Activated B cell treated with CpG ODN at 0.5 μM for 24 hours (primary cell): ENCODE measurements at regions of chr10 and their contacts with region 1.

Region 1: GRCh38 chr10:28676968-28677887 is at the start of gene BAMBI:
- DNase-seq: peak; percentile 85
- ATAC-seq: peak; percentile 97
- H3K4me3 Mint-ChIP-seq: peak within 1 kb of the TSS; percentile 81
- H3K27ac Mint-ChIP-seq: no peak within 1 kb of the TSS
- H3K4me1 Mint-ChIP-seq: peaks cover 30% of the 10 kb centered on the region
- H3K27me3 Mint-ChIP-seq: peaks cover 51% of the 10 kb centered on the region
- CTCF ChIP-seq: no peak
- total RNA-seq, gene BAMBI: 0.16 and 0.32 TPM in 2 replicates

Region 2: DNA sequence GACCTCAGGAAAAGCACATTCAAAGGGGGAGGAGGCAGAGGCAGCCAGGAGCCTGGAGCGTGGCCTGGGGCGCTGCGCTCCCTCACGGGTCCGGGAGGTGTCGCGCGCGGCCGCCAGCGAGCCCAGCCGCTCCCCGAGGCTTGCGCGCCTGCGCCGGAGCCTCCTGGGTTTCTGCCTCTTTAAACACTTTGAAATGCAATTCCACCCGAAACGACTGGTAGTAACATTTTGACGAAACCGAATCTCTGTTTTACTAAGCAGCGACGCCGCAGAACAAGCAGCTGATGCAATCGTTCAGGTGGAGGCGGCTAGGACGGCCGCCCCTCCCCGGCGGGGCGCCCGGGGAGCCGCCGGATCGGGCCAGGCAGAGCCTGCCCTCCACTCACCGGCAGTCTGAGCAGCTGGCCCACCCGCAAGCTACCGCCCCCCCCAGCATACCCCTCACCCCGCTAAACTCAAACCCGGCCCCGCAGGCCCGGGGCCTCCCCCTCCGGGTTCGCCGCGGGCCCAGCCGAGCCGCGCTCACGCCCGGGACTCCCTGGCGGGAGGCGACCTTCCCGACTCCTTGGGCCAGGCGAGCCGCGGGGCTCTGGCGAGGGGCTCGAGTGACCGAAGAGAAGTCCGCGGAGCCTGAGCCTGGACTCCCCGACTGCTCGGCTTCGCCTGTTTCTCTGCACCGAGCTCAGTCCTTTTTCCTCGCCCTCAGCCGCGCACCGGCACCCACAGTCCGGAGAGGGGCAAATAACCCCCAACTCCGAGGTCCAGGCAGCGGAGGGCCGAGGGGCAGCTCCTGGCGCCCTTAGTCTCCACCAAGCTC is 934.8 kb before region 1 on chr10:
- CTCF ChIA-PET with region 1: no interaction called
- POLR2A ChIA-PET with region 1: no interaction called
- intact Hi-C with region 1: loop called (anchors 5 kb)
- DNase-seq: peak; percentile 66
- ATAC-seq: peak; percentile 91
- H3K4me3 Mint-ChIP-seq: peak overlapping the region; percentile 76
- H3K27ac Mint-ChIP-seq: no peak overlapping the region
- H3K4me1 Mint-ChIP-seq: peaks cover 24% of the 10 kb centered on the region
- H3K27me3 Mint-ChIP-seq: peaks cover 60% of the 10 kb centered on the region
- CTCF ChIP-seq: no peak

Region 3: DNA sequence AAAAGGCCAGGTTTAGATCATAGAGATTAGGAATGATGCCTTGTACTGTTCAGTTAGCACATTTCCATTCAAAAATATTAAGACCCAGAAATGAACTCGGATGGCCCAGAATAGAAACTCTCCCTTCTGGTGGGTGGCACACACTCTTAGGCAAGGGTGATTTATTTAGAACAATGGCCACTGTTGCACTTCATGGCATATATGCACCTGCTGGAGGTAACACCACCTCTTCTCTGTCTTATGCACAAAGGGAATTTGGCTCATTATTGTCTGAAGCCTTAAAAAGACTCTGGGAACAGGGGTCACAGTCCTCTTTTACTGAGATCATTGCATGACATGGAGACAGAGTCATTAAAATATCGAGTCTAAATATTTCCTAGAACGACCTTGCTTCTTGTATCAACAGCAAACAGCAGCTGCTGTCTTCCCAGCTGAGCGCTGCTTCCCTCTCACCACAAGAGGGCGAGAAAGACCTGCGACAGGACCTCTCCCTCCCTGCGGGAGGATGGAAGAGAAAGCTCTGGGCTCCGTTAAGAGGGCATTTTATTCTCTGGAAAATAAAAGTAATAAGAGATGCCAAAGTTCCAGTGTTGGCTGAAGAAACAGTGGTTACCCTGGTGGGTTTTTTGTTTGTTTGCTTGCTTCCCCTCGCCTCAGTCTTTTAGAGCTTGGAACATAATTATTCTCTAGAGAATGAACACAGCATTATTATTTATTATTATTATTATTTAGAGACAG is 13.5 kb before region 1 on chr10:
- CTCF ChIA-PET with region 1: interaction called, 9 read pairs
- POLR2A ChIA-PET with region 1: no interaction called
- intact Hi-C with region 1: loop called (anchors 1 kb)
- DNase-seq: peak; percentile 32
- ATAC-seq: peak; percentile 84
- H3K4me3 Mint-ChIP-seq: no peak overlapping the region
- H3K27ac Mint-ChIP-seq: no peak overlapping the region
- H3K4me1 Mint-ChIP-seq: peaks cover 7% of the 10 kb centered on the region
- H3K27me3 Mint-ChIP-seq: peaks cover 41% of the 10 kb centered on the region
- CTCF ChIP-seq: no peak

Region 4: DNA sequence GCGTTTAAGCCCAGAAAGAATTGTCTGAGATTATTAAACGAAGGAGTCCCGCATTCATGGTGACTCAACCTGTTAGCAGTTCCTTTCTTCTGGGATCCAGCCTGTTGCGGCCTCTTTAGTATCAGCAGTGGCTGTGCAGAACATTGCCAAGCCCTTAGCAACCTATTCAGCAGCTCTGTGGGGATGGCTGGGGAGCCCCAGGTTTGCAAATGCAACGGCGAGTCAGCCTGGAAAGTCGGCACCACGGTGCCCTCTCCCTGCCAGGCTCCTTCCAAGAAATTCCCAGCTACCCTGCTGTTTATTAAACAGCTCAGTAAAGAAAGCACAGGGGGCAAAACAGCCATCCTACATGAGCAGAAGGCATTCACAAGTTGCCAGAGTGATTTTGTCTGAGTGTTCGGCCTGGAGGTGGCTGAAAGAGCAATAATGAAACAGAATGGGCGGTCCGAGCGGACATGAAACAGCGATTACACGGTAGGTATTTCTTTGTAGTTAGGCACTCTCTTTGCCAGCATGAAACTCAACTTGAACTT is 198.4 kb after region 1 on chr10:
- CTCF ChIA-PET with region 1: no interaction called
- POLR2A ChIA-PET with region 1: no interaction called
- intact Hi-C with region 1: loop called (anchors 5 kb)
- DNase-seq: no peak
- ATAC-seq: no peak
- H3K4me3 Mint-ChIP-seq: no peak overlapping the region
- H3K27ac Mint-ChIP-seq: no peak overlapping the region
- H3K4me1 Mint-ChIP-seq: no peaks in the 10 kb centered on the region
- H3K27me3 Mint-ChIP-seq: no peaks in the 10 kb centered on the region
- CTCF ChIP-seq: no peak

Region 5: GRCh38 chr10:29304264-29305030 is 627.2 kb after region 1 on chr10:
- CTCF ChIA-PET with region 1: no interaction called
- POLR2A ChIA-PET with region 1: no interaction called
- intact Hi-C with region 1: loop called (anchors 5 kb)
- DNase-seq: no peak
- ATAC-seq: no peak
- H3K4me3 Mint-ChIP-seq: no peak overlapping the region
- H3K27ac Mint-ChIP-seq: no peak overlapping the region
- H3K4me1 Mint-ChIP-seq: no peaks in the 10 kb centered on the region
- H3K27me3 Mint-ChIP-seq: peaks cover 11% of the 10 kb centered on the region
- CTCF ChIP-seq: no peak